CD8-positive, alpha-beta T cell (primary cell): ENCODE measurements at regions of chr15 and their contacts with region 1.

Region 1: DNA sequence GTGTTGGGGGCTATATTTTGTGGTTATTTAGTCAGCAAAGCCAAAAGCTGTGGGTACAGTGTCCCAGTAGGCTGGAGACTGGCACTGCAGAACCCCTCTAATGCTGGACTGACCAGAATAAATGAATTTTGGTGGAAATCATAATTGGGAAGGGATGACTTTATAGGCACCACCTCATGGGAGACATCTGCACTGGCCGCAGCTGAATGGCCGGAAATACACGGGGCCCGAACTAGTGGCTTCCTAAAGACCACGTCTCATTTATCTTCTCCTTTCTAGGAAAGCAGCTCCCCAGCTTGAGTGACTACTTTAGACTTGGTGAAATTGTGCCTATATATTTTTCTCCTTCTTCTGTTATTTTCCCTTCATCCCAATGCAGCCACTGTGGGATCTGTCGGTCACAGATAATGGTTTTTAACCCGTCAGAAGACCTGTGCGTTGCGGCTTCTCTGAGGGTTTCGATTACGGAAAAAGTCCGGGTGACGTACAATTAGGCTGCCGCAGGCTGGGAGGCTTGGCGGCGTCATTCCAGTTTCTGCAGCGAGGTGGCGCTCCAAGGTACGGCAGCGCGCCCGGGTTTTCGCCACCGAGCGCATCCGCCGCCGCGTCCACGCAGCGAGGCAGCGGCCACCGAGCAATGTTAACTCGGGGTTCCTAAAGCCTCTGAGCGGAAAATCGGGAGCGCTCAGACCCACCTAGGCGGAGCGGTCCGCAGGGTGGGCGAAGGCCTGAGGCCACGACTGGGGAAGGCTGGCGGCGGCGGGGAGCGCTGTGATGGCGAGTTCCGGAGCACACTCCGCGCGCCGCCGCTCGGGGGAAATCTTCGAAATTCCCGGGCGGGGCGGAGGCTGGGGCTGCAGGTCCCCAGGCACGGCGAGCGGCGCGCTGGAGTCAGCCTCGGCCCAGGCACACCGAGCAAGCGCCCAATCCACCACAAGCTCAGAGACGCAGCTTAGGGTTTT is 26.3 kb downstream of the NR2F2 start:
- DNase-seq: peak; percentile 44 to 75 (median 59)
- ATAC-seq: peak; percentile 80
- H3K4me3 ChIP-seq: peak overlapping the region; percentile 37 to 46
- H3K4me3 Mint-ChIP-seq: peak overlapping the region; percentile 83
- H3K27ac ChIP-seq: no peak overlapping the region
- H3K27ac Mint-ChIP-seq: no peak overlapping the region
- H3K4me1 ChIP-seq: peaks cover 21% of the 10 kb centered on the region
- H3K4me1 Mint-ChIP-seq: peaks cover 28% of the 10 kb centered on the region
- H3K27me3 ChIP-seq: peaks cover 51 to 68% of the 10 kb centered on the region in 2 experiments
- H3K27me3 Mint-ChIP-seq: peaks cover 62% of the 10 kb centered on the region
- CTCF ChIP-seq: peak; percentile 82

Region 2: GRCh38 chr15:96330450-96331145 is 26.2 kb before region 1 on chr15 and contains the start of gene NR2F2:
- CTCF ChIA-PET with region 1: no interaction called
- POLR2A ChIA-PET with region 1: no interaction called
- intact Hi-C with region 1: loop called in 1 of 2 experiments (anchors 1 kb)
- DNase-seq: peak in 5 of 9 experiments; percentile 3 to 70 (median 46)
- ATAC-seq: peak; percentile 71
- H3K4me3 ChIP-seq: peak within 1 kb of the TSS; percentile 34 to 57
- H3K4me3 Mint-ChIP-seq: peak within 1 kb of the TSS; percentile 78
- H3K27ac ChIP-seq: no peak within 1 kb of the TSS
- H3K27ac Mint-ChIP-seq: no peak within 1 kb of the TSS
- H3K4me1 ChIP-seq: peaks cover 13% of the 10 kb centered on the region
- H3K4me1 Mint-ChIP-seq: peaks cover 25% of the 10 kb centered on the region
- H3K27me3 ChIP-seq: peaks cover 41 to 42% of the 10 kb centered on the region in 2 experiments
- H3K27me3 Mint-ChIP-seq: peaks cover 75% of the 10 kb centered on the region
- CTCF ChIP-seq: no peak
- total RNA-seq, gene NR2F2: not detected

Region 3: DNA sequence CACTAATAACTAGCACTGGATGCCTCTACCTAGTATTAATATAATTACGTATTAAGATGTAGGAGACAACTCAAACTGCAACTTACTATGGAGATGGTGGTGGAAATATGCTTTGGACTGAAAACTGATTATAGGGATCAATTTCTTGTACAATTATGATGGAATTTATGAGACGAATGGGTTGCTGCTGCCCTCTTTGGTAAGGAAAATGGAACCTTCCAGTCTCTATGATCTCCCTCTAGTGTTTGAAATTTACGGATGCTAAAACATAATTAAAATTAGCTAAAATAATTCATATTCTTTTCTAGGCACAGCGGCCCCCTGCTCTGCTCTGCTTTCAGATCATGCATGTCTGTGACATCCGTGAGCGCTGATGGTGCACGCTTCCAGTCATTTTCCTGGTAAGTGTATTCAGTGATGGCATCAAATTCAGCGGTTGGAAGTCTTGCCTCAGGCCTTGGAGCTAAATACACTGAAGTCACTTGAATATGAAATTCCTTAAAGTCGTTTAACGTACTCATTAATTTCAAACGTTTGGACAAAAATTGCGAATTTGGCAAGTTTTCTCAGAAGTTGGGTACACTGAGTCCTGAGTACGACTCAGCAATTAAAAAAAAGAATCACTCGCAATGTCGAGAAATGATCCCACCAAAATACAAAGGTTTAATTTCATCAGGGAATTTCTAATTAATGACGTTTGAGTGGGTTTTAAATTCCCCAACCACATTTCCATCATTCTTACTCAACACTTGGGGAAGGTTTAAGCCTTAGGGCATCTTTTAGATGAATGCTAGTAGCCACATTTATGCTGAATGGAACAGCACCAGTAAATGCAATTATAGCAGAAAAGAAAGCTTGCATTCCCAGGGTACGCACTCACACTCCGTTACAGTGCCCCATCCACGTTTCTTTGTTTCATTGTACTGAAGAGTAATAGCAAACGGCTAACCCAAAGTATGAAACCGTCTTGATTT is 106.3 kb after region 1 on chr15:
- CTCF ChIA-PET with region 1: no interaction called
- POLR2A ChIA-PET with region 1: no interaction called
- intact Hi-C with region 1: no loop called
- DNase-seq: no peak
- ATAC-seq: no peak
- H3K4me3 ChIP-seq: no peak overlapping the region
- H3K4me3 Mint-ChIP-seq: no peak overlapping the region
- H3K27ac ChIP-seq: no peak overlapping the region
- H3K27ac Mint-ChIP-seq: no peak overlapping the region
- H3K4me1 ChIP-seq: no peaks in the 10 kb centered on the region
- H3K4me1 Mint-ChIP-seq: no peaks in the 10 kb centered on the region
- H3K27me3 ChIP-seq: no peaks in the 10 kb centered on the region
- H3K27me3 Mint-ChIP-seq: peaks cover 3% of the 10 kb centered on the region
- CTCF ChIP-seq: no peak

Region 4: DNA sequence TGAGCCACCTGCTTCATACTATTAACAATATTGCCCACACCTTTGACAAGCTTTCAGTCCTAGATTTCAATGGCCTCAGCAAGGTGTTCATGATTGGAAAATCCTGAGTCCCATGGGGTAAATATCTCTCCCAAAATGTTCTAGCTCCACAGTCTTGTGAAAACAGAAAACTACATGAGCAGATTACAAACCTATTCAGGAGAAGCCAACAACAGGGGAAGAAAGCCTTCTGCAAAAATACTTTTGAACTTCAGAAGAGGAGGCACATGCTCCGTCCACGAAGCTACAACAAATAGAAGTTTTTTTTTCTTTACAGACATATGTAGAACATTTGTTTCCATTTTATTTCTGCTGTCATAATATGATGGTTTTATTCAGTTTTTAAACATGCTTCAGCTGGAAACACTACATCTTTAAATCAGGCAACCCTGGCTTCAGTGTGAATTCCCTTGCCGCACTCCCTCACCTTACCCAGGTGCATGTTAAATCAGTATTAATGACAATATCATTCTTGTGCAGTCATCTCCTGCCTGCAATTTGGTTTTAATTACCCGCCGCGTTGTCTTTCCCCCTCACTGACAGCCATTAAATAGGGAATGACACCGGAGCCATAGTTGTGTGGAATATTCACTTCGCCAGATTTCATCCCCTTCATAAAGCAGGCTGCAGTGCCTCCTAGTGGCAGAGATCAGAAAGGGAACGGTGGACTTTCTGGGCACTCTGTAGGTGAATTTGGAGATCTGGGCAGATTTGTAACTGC is 878.3 kb after region 1 on chr15:
- CTCF ChIA-PET with region 1: no interaction called
- POLR2A ChIA-PET with region 1: no interaction called
- intact Hi-C with region 1: loop called in 1 of 2 experiments (anchors 10 kb)
- DNase-seq: peak in 4 of 9 experiments; percentile 9 to 27 (median 16)
- ATAC-seq: no peak
- H3K4me3 ChIP-seq: no peak overlapping the region
- H3K4me3 Mint-ChIP-seq: no peak overlapping the region
- H3K27ac ChIP-seq: no peak overlapping the region
- H3K27ac Mint-ChIP-seq: no peak overlapping the region
- H3K4me1 ChIP-seq: no peaks in the 10 kb centered on the region
- H3K4me1 Mint-ChIP-seq: no peaks in the 10 kb centered on the region
- H3K27me3 ChIP-seq: no peaks in the 10 kb centered on the region
- H3K27me3 Mint-ChIP-seq: peaks cover 3% of the 10 kb centered on the region
- CTCF ChIP-seq: peak; percentile 57